ENCODE measurements at regions of chr19 and their contacts with region 1.

Region 1: DNA sequence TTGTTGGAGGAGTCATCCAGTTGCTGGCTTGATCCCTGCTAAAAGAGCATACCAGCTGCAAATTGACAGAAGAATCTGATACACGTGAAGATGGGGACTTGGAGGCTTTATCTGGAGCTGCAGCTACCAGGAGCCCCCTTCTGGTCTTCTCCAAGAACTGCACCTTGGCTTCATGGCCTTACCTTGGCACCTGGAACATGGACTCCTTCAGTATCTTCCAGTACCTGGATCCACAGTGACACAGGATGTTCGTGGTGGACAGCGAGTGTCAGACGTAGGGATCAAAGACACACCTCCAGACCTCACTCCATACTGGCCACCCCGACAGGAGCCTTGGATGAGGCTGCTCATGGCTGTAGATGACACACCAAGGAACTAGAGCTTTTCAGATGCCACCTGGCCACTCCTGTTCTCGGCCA is 9.9 kb upstream of the ACSBG2 start:
- DNase-seq: peak; percentile 40
- ATAC-seq: peak; percentile 95
- H3K4me3 ChIP-seq: no peak overlapping the region
- H3K27ac ChIP-seq: no peak overlapping the region
- H3K4me1 ChIP-seq: peaks cover 6% of the 10 kb centered on the region; the same call in 1 of the 2 replicates
- H3K27me3 ChIP-seq: no peaks in the 10 kb centered on the region
- CTCF ChIP-seq: peak; percentile 95 to 96 (median 95)
- EP300 ChIP-seq: no peak
- POLR2A ChIP-seq: no peak
- RAD21 ChIP-seq: peak; percentile 91

Region 2: GRCh38 chr19:5753743-5754142 is 371.8 kb before region 1 on chr19:
- CTCF ChIA-PET with region 1: no interaction called
- POLR2A ChIA-PET with region 1: no interaction called
- RAD21 ChIA-PET with region 1: no interaction called
- SMC1A ChIA-PET with region 1: no interaction called
- in situ Hi-C with region 1: no loop called
- intact Hi-C with region 1: no loop called
- DNase-seq: no peak
- ATAC-seq: no peak
- H3K4me3 ChIP-seq: no peak overlapping the region
- H3K27ac ChIP-seq: no peak overlapping the region
- H3K4me1 ChIP-seq: no peaks in the 10 kb centered on the region
- H3K27me3 ChIP-seq: no peaks in the 10 kb centered on the region
- CTCF ChIP-seq: no peak
- EP300 ChIP-seq: no peak
- POLR2A ChIP-seq: no peak
- RAD21 ChIP-seq: no peak

Region 3: GRCh38 chr19:5987077-5987818 is 138.3 kb before region 1 on chr19:
- CTCF ChIA-PET with region 1: interaction called, 45 read pairs
- POLR2A ChIA-PET with region 1: no interaction called
- RAD21 ChIA-PET with region 1: interaction called, 19 read pairs
- SMC1A ChIA-PET with region 1: interaction called, 28 read pairs
- in situ Hi-C with region 1: no loop called
- intact Hi-C with region 1: loop called (anchors 1 kb)
- DNase-seq: peak; percentile 19
- ATAC-seq: peak; percentile 75
- H3K4me3 ChIP-seq: peak overlapping the region; percentile 40; the same call in 1 of the 2 replicates
- H3K27ac ChIP-seq: no peak overlapping the region
- H3K4me1 ChIP-seq: peaks cover 8% of the 10 kb centered on the region
- H3K27me3 ChIP-seq: no peaks in the 10 kb centered on the region
- CTCF ChIP-seq: peak; percentile 89 to 95 (median 95)
- EP300 ChIP-seq: no peak
- POLR2A ChIP-seq: no peak
- RAD21 ChIP-seq: peak; percentile 84

Region 4: DNA sequence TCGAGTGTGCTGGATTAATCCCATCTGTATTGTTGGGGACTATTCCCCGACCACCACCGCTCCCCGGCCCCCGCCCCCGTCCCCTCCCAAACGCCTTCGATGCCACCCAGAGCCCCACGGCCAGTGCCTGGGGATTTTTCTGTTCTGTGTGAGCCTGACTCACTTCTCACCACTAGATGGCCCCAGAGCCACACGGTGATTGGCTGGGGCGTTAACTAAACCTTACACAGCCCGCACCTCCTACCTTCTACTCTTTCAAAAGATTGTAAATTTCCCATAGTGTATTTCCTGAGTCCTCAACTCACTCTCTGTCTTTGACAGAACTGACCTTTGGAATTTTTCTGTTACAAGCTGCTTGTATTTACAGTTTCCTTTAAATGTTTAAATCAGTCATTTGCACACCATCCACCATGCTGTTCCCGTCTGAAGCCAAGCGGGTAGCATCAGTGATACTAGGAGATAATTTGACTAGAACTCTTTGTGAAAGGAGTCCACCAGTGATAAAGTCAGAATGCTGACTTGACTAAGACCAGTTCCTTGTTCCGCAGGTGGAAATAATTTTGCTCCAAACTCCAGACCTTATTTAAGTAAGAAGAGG is 76.7 kb before region 1 on chr19:
- CTCF ChIA-PET with region 1: interaction called, 194 read pairs
- POLR2A ChIA-PET with region 1: interaction called, 5 read pairs
- RAD21 ChIA-PET with region 1: interaction called, 74 read pairs
- SMC1A ChIA-PET with region 1: interaction called, 71 read pairs
- in situ Hi-C with region 1: no loop called
- intact Hi-C with region 1: loop called (anchors 1 kb)
- DNase-seq: peak; percentile 35
- ATAC-seq: peak; percentile 100
- H3K4me3 ChIP-seq: no peak overlapping the region
- H3K27ac ChIP-seq: no peak overlapping the region
- H3K4me1 ChIP-seq: no peaks in the 10 kb centered on the region; the same call in 1 of the 2 replicates
- H3K27me3 ChIP-seq: no peaks in the 10 kb centered on the region
- CTCF ChIP-seq: peak; percentile 78 to 92 (median 92)
- EP300 ChIP-seq: no peak
- POLR2A ChIP-seq: no peak
- RAD21 ChIP-seq: peak; percentile 97

Region 5: DNA sequence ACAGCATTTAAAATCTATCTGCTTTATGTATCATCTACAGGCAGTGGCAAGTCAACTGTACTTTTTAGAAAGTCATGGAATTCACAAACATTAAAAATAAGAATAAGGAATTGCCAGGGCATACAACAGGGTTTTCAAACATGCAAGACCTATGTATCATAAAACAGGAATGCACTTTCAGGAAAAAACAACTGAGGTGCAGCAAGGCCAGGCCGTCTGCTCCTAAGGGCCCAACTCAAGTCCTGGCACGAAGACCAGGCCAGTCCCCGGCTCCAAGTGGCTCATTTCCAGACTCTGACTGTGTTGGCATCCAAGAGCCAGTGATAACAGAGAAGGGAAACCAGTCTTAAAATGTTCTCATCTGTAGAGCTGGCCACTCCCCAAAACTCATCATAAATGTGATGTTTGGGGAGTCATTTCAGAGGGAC is 22.3 kb before region 1 on chr19:
- CTCF ChIA-PET with region 1: interaction called, 11 read pairs
- POLR2A ChIA-PET with region 1: interaction called, 4 read pairs
- RAD21 ChIA-PET with region 1: interaction called, 4 read pairs
- SMC1A ChIA-PET with region 1: interaction called, 5 read pairs
- in situ Hi-C with region 1: no loop called
- intact Hi-C with region 1: no loop called
- DNase-seq: no peak
- ATAC-seq: peak; percentile 49; the same call in 1 of the 3 replicates
- H3K4me3 ChIP-seq: no peak overlapping the region
- H3K27ac ChIP-seq: no peak overlapping the region
- H3K4me1 ChIP-seq: no peaks in the 10 kb centered on the region
- H3K27me3 ChIP-seq: no peaks in the 10 kb centered on the region
- CTCF ChIP-seq: no peak
- EP300 ChIP-seq: no peak
- POLR2A ChIP-seq: no peak
- RAD21 ChIP-seq: no peak

Region 6: DNA sequence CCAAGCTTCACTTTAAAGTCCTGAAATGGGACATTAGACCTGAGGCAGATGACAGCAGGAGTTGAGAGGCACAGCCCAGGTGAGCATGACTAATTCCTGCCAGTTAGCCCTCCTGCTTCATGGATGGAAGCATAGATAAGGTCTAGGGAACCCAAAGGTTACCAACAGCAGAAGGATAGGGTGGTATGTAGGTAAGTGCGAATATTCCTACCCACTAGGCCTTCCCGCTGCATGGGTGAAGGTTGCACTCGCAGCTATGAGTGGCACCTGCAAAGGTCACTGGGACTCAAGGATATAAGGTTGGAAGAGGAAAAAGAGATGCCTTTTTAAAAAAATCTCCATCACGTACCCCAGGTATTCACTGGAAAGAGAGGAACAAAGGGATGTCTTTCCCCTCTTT is 166.4 kb after region 1 on chr19:
- CTCF ChIA-PET with region 1: interaction called, 26 read pairs
- POLR2A ChIA-PET with region 1: no interaction called
- RAD21 ChIA-PET with region 1: interaction called, 20 read pairs
- SMC1A ChIA-PET with region 1: interaction called, 16 read pairs
- in situ Hi-C with region 1: no loop called
- intact Hi-C with region 1: no loop called
- DNase-seq: no peak
- ATAC-seq: no peak
- H3K4me3 ChIP-seq: no peak overlapping the region
- H3K27ac ChIP-seq: no peak overlapping the region
- H3K4me1 ChIP-seq: no peaks in the 10 kb centered on the region
- H3K27me3 ChIP-seq: no peaks in the 10 kb centered on the region
- CTCF ChIP-seq: no peak
- EP300 ChIP-seq: no peak
- POLR2A ChIP-seq: no peak
- RAD21 ChIP-seq: no peak

Region 7: DNA sequence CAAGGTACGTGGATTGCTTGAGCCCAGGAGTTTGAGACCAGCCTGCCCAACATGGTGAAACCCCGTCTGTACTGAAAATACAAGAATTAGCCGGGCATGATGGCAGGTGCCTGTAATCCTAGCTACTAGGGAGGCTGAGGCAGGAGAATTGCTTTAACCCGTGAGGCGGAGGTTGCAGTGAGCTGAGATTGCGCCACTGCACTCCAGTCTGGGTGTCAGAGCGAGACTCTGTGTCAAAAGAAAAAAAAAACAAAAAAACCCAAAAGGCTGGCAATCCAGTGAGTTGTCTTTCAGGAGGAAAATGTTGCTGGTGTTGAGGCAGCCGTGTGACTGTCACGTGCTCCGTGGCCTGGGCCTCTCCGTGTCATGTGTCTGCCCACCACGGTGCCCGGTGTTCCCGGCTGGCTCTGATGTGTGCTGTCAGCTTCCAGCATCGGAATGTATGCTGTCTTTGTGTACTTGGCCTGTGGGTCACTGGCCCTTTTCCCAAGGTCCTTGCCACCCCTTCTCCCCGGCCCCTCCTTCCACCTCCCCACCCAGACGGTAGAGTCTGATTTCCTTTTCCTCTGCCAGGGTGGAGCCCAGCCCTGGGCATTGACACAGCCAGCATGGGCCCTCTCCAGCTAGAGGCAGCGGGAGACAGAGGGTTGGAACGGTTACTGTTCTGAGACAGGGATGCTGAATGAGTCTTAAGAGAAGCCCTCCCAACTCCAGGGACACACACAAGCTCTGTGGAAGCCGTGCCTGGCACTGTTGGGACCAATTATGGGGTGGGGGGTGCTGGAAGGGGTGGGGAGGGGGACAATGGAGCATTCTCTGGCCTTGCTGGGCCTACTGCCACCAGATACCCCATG is 383.8 kb after region 1 on chr19:
- CTCF ChIA-PET with region 1: interaction called, 3 read pairs
- POLR2A ChIA-PET with region 1: no interaction called
- RAD21 ChIA-PET with region 1: interaction called, 4 read pairs
- SMC1A ChIA-PET with region 1: interaction called, 7 read pairs
- in situ Hi-C with region 1: no loop called
- intact Hi-C with region 1: loop called (anchors 5 kb)
- DNase-seq: no peak
- ATAC-seq: no peak
- H3K4me3 ChIP-seq: no peak overlapping the region
- H3K27ac ChIP-seq: no peak overlapping the region
- H3K4me1 ChIP-seq: 0 out of 2 replicates have a peak, but pooled peaks cover 3% of the 10 kb centered on the region
- H3K27me3 ChIP-seq: no peaks in the 10 kb centered on the region
- CTCF ChIP-seq: no peak
- EP300 ChIP-seq: no peak
- POLR2A ChIP-seq: no peak
- RAD21 ChIP-seq: no peak

Measured in GM12878 (cell line).